CD14-positive monocyte (primary cell): ENCODE measurements at regions of chr16 and their contacts with region 1.

Region 1: DNA sequence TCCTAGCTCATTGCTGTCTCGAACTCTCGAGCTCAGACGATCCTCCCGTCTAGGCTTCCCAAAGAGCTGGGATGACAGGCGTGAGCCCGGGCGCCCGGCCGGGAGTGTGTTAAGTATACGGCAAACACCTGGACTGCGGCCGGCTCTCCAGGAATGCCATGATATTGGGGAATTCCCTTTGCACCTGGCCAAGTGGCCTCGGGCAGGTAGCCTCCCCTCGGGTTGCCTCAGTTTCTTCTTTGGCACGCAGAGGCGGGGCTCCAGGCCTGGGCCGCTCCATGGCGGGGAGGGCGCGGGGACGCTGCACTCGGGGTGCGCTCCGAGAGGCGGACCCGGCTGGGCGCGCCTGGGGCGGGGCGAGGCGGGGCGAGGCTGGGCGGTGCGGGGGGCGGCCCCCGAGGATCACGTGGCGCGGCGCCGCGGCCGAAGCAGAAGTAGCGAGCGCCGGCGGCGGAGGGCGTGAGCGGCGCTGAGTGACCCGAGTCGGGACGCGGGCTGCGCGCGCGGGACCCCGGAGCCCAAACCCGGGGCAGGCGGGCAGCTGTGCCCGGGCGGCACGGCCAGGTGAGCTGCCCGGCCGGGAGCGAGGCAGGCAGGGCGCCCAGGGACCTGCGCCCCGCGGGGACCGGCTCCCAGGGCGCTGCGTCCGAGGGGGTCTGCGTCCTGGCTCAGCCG is at the start of gene PLCG2:
- DNase-seq: peak; percentile 71 to 81 (median 76)
- H3K4me3 ChIP-seq: peak within 1 kb of the TSS; percentile 82 to 94 (median 89)
- H3K4me3 Mint-ChIP-seq: peak within 1 kb of the TSS; percentile 96 to 97
- H3K27ac ChIP-seq: peak within 1 kb of the TSS; percentile 52 to 93
- H3K27ac Mint-ChIP-seq: peak within 1 kb of the TSS; percentile 89 to 96 (median 92)
- H3K4me1 ChIP-seq: peaks cover 35 to 45% of the 10 kb centered on the region in 2 donors
- H3K4me1 Mint-ChIP-seq: peaks cover 54% of the 10 kb centered on the region
- H3K27me3 ChIP-seq: no peaks in the 10 kb centered on the region
- H3K27me3 Mint-ChIP-seq: peaks cover 2 to 5% (median 2%) of the 10 kb centered on the region in 3 donors
- CTCF ChIP-seq: no peak
- polyA plus RNA-seq, gene PLCG2: 19.5 to 47.4 (median 35.5) TPM

Region 2: DNA sequence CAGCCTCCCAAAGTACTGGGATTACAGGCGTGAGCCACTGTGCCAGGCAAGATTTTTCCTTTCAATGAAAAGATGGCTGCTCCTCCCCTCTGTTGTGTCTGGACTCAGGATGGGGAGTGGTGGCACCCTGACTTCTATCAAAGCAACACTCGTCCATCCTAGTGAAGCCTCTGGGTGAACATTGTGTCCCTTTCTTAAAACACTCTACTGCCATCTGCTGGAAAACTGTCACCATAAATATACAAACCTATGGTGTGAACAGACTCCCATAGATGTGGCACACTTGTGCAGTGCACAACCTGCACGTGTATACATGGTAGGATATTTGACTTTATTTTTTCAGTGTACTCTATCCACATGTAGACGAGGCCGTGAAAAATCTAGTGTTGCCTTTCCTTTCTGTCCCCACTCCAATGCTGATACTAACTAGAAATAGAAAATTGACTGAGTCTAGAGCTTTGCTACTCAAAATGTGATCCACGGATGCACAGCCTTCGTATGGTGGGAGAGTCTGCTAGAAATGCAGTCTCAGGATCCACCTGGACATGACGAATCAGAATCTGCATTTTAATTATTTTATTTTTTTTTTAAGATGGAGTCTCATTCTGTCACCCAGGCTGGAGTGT is 55.8 kb before region 1 on chr16:
- intact Hi-C with region 1: no loop called
- DNase-seq: peak; percentile 57 to 71 (median 67)
- H3K4me3 ChIP-seq: no peak overlapping the region
- H3K4me3 Mint-ChIP-seq: no peak overlapping the region
- H3K27ac ChIP-seq: no peak overlapping the region
- H3K27ac Mint-ChIP-seq: no peak overlapping the region
- H3K4me1 ChIP-seq: peaks cover 10% of the 10 kb centered on the region in 2 donors
- H3K4me1 Mint-ChIP-seq: peaks cover 14% of the 10 kb centered on the region
- H3K27me3 ChIP-seq: no peaks in the 10 kb centered on the region
- H3K27me3 Mint-ChIP-seq: peaks cover 0 to 10% (median 4%) of the 10 kb centered on the region in 3 donors
- CTCF ChIP-seq: peak; percentile 80

Region 3: GRCh38 chr16:81823111-81823510 is 44.1 kb after region 1 on chr16:
- intact Hi-C with region 1: loop called in 1 of 2 experiments (anchors 5 kb)
- DNase-seq: peak; percentile 53 to 75 (median 59)
- H3K4me3 ChIP-seq: peak overlapping the region in 1 of 3 experiments; percentile 48
- H3K4me3 Mint-ChIP-seq: peak overlapping the region in 1 of 2 donors; percentile 87
- H3K27ac ChIP-seq: peak overlapping the region; percentile 66 to 79
- H3K27ac Mint-ChIP-seq: peak overlapping the region; percentile 68 to 94 (median 88)
- H3K4me1 ChIP-seq: peaks cover 71 to 80% of the 10 kb centered on the region in 2 donors
- H3K4me1 Mint-ChIP-seq: peaks cover 76% of the 10 kb centered on the region
- H3K27me3 ChIP-seq: no peaks in the 10 kb centered on the region
- H3K27me3 Mint-ChIP-seq: peaks cover 0 to 1% (median 0%) of the 10 kb centered on the region in 3 donors
- CTCF ChIP-seq: no peak

Region 4: DNA sequence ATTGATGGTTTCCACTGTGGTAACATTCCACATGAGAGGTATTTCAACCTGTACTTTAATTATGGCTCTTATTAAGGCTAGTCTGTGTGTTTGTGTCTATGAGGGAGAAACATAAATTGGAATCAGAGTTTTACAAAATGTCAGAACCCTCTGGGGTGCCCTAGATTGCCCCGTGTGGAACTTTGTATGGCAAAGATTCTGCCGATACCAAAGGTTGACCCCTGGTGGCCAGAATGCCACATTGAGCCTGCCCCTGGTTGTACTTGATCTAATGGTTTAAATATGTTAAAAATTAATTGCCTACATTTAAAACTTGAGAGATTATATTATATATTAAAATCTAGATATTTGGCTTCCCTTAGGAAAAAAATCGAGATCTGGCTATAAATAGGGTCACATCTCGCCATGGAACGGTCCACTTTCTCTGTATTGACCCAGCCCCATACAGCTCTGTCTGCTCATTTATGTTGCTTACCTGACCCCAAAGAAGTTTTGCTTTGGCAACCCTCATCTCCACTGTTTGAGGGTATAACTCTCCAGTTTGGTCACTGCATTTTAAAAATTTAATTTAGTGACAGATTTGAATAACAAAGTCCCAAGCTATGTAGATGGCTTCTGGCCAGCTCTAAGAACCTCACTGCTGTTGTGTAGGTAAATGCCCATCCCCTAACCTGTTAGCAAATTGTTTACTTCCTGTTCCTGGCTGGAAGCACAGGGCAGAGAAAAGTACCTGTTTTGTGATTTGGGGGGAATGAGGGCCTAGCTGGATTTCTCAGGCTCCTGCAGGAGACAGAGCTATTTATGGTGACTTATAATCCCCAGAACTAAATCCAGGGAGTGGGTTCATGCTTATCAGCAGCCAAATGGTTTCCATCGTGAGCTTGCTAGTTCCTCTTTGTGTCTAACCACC is 95.1 kb after region 1 on chr16:
- intact Hi-C with region 1: loop called in 1 of 2 experiments (anchors 10 kb)
- DNase-seq: peak; percentile 49 to 66 (median 53)
- H3K4me3 ChIP-seq: no peak overlapping the region
- H3K4me3 Mint-ChIP-seq: no peak overlapping the region
- H3K27ac ChIP-seq: peak overlapping the region in 1 of 2 donors; percentile 16
- H3K27ac Mint-ChIP-seq: peak overlapping the region in 4 of 7 donors; percentile 15 to 82 (median 54)
- H3K4me1 ChIP-seq: peaks cover 0 to 5% of the 10 kb centered on the region in 2 donors
- H3K4me1 Mint-ChIP-seq: peaks cover 4% of the 10 kb centered on the region
- H3K27me3 ChIP-seq: no peaks in the 10 kb centered on the region
- H3K27me3 Mint-ChIP-seq: no peaks in the 10 kb centered on the region
- CTCF ChIP-seq: peak; percentile 96